BJ (cell line): ENCODE measurements at regions of chr7 and their contacts with region 1.

Region 1: DNA sequence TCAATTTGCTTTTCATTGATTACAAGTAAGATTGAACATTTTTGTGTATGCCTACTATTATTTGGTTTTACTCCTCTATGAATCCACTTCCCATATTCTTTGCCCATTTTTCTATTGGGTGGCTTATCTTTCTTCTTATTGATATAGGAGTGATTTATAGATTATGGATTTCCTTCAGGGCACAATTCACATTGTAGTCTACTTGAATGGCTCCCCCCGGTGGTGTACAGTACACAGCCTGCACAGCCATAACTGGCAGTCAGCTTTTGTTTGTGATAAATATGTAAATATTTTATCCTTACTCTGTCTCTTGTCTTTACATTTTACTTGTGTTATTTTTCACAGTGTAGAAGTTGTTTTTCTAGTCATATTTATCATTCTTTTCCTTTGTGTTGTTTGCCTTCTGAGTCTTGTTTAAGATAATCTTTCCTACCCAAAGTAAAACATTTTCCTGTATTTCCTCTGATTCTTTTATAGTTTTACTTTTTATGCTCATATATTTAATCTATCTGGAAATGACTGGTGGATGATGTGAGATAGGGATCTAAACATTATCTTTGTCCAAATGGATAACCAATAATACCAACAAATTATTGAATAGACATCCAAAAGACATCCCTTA is 23.9 kb upstream of the CALD1 start:
- DNase-seq: no peak
- H3K4me3 ChIP-seq: no peak overlapping the region
- H3K27me3 ChIP-seq: no peaks in the 10 kb centered on the region
- CTCF ChIP-seq: peak; percentile 79

Region 2: DNA sequence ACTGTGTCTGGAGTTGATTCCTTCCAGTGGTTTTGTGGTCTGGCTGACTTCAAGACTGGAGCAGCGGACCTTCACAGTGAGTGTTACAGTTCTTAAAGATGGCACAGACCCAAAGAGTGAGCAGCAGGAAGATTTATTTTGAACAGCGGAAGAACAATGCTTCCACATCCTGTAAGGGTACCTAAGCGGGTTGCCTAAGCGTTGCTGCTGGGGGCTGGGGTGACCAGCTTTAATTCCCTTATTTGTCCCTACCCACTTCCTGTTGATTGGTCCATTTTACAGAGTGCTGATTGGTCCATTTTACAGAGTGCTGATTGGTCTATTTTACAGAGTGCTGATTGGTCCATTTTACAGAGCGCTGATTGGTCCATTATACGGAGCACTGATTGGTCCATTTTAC is 193.4 kb before region 1 on chr7:
- CTCF ChIA-PET with region 1: no interaction called
- POLR2A ChIA-PET with region 1: no interaction called
- DNase-seq: no peak
- H3K4me3 ChIP-seq: no peak overlapping the region
- H3K27me3 ChIP-seq: peaks cover 3% of the 10 kb centered on the region
- CTCF ChIP-seq: no peak

Region 3: GRCh38 chr7:134654104-134654775 is 101.3 kb before region 1 on chr7:
- CTCF ChIA-PET with region 1: no interaction called
- POLR2A ChIA-PET with region 1: no interaction called
- DNase-seq: no peak
- H3K4me3 ChIP-seq: no peak overlapping the region
- H3K27me3 ChIP-seq: no peaks in the 10 kb centered on the region
- CTCF ChIP-seq: no peak

Region 4: DNA sequence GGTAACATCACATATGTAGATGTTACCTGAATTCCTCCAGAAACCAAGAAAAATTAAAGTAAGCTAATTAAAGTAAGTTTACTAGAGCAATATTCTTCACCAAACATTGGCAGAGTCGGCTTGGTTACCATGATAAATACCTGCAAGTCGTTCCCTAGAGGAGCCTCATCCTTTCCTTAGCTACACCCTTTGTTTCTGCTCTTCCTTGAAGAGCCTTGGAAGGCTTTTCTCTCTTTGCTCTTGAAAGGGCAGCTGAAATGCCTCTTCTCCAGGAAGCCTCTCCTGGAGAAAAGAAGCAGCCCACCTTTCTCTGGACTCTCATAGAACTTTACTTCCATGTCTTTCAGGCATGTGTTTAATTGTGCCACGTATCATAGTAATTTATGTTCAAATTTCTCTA is 10.9 kb before region 1 on chr7:
- CTCF ChIA-PET with region 1: interaction called, 15 read pairs
- POLR2A ChIA-PET with region 1: no interaction called
- DNase-seq: no peak
- H3K4me3 ChIP-seq: no peak overlapping the region
- H3K27me3 ChIP-seq: no peaks in the 10 kb centered on the region
- CTCF ChIP-seq: no peak

Region 5: GRCh38 chr7:134954197-134955082 is 198.9 kb after region 1 on chr7:
- CTCF ChIA-PET with region 1: no interaction called
- POLR2A ChIA-PET with region 1: no interaction called
- DNase-seq: no peak
- H3K4me3 ChIP-seq: no peak overlapping the region
- H3K27me3 ChIP-seq: no peaks in the 10 kb centered on the region
- CTCF ChIP-seq: peak; percentile 36